ENCODE measurements at regions of chr4 and their contacts with region 1.

Region 1: DNA sequence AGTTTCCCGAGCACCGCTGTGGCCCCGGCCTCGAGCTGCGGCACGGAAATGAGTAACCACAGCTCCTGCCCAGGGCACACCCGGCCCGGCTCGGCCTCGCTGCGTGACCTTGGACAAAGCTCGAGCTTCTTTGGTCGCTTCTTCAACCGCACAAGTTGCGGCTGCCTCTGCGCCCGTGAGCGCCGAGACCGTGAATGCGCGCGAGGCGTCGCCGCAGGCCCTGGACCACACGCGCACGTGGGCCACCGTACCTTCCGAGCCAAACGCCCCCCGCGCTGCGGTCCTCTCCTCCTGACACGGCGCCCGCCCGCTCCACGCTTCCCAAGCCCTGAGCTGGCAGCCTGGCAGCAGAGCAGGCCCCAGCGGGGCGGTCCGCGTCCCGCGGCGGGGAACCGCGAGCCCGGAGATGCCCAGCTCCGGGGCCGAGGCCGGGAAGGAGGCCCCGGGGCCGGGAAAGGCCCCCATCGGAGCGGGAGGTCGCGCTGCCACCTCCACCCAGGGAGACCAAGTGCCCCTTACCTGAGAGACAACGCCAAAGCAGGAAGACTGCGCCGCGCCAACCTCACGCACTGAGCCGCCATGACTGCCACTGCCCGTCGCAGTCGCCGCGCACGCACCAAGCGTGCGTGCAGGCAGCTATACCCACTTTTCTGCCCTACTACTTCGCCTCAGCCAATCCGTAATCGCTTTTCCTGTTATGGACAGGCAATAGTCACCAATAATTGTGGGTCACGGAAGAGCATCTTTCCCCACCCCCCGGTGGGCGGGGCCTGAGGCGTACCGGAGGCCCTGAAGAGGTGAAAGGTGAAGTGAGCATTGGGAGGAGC is at the start of gene GRPEL1:
- DNase-seq: peak; percentile 100
- H3K4me3 ChIP-seq: peak within 1 kb of the TSS; percentile 56 to 99 (median 90)
- H3K27ac ChIP-seq: peak within 1 kb of the TSS; percentile 88 to 95 (median 92)
- H3K4me1 ChIP-seq: peaks cover 0 to 39% (median 28%) of the 10 kb centered on the region in 4 donors
- H3K27me3 ChIP-seq: no peaks in the 10 kb centered on the region
- CTCF ChIP-seq: no peak
- EP300 ChIP-seq: no peak
- POLR2A ChIP-seq: peak; percentile 93 to 95
- total RNA-seq, gene GRPEL1: 7.5 to 23.2 (median 15.0) TPM

Region 2: GRCh38 chr4:6909073-6909965 is 158.3 kb before region 1 on chr4 and contains the start of gene TBC1D14:
- intact Hi-C with region 1: loop called (anchors 2 kb)
- DNase-seq: peak; percentile 95
- H3K4me3 ChIP-seq: peak within 1 kb of the TSS; percentile 76 to 88 (median 84)
- H3K27ac ChIP-seq: peak within 1 kb of the TSS; percentile 96 to 99 (median 98)
- H3K4me1 ChIP-seq: peaks cover 0 to 30% (median 26%) of the 10 kb centered on the region in 4 donors
- H3K27me3 ChIP-seq: no peaks in the 10 kb centered on the region
- CTCF ChIP-seq: no peak
- EP300 ChIP-seq: no peak
- POLR2A ChIP-seq: no peak
- total RNA-seq, gene TBC1D14: 26.3 to 46.4 (median 32.6) TPM

Region 3: GRCh38 chr4:6974138-6974848 is 93.4 kb before region 1 on chr4:
- intact Hi-C with region 1: loop called (anchors 1 kb)
- DNase-seq: peak; percentile 89
- H3K4me3 ChIP-seq: no peak overlapping the region
- H3K27ac ChIP-seq: no peak overlapping the region
- H3K4me1 ChIP-seq: peaks cover 0 to 10% (median 8%) of the 10 kb centered on the region in 4 donors
- H3K27me3 ChIP-seq: no peaks in the 10 kb centered on the region
- CTCF ChIP-seq: peak; percentile 89 to 99 (median 96)
- EP300 ChIP-seq: no peak
- POLR2A ChIP-seq: no peak

Region 4: GRCh38 chr4:7042697-7043464 is 24.8 kb before region 1 on chr4 and contains the start of gene TADA2B:
- intact Hi-C with region 1: loop called (anchors 1 kb)
- DNase-seq: peak; percentile 99
- H3K4me3 ChIP-seq: peak within 1 kb of the TSS; percentile 86 to 99 (median 98)
- H3K27ac ChIP-seq: peak within 1 kb of the TSS; percentile 91 to 95 (median 92)
- H3K4me1 ChIP-seq: peaks cover 0 to 51% (median 47%) of the 10 kb centered on the region in 4 donors
- H3K27me3 ChIP-seq: no peaks in the 10 kb centered on the region
- CTCF ChIP-seq: peak in 1 of 4 experiments; percentile 30
- EP300 ChIP-seq: no peak
- POLR2A ChIP-seq: no peak
- total RNA-seq, gene TADA2B: 15.0 to 22.7 (median 17.2) TPM